ENCODE measurements at regions of chr16 and their contacts with region 1.

Region 1: DNA sequence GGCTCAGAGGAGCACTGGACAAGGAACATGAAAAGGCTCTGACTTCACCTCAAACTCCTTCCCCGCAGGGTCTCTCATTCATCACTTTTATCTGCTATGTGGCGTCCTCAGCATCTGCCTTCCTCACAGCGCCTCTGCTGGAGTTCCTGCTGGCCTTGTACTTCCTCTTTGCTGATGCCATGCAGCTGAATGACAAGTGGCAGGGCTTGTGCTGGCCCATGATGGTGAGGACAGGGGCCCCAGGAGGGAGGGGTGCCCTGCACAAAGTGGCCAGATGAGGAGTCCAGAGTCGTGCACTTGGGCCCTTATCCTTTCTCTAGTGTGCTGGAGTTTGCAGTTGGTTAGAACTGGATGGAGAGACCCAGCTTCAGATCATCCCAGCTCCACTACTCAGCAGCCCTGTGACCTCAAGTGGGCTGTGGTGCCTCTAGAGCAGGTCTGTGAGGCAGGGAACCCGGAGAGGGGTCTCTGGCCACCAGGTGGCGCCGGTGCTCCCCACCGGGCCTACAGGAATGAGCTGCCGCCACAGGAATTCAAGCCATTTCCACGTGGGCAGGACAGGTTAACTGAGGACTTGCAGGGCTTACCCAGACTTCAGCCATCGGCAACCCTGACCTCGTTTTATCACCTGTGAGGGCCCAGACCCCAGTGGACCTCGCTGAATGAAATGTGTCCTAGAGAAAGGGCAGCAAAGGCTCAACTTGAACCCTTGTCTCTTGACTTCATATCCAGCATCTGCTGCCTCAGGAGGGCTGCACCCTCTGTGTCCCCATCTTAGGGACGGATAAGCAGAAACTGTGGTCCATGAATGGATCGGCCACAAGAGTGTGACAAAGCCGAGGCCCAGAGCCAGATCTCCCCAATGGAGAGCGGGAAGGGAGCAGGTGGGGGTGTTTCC is 4.0 kb downstream of the CMTM3 start:
- DNase-seq: peak; percentile 94
- H3K4me3 Mint-ChIP-seq: peak overlapping the region; percentile 68
- H3K27ac Mint-ChIP-seq: peak overlapping the region; percentile 76
- H3K4me1 Mint-ChIP-seq: peaks cover 33% of the 10 kb centered on the region
- H3K27me3 Mint-ChIP-seq: no peaks in the 10 kb centered on the region

Region 2: GRCh38 chr16:66116163-66117002 is 492.1 kb before region 1 on chr16:
- intact Hi-C with region 1: no loop called
- DNase-seq: no peak
- H3K4me3 Mint-ChIP-seq: no peak overlapping the region
- H3K27ac Mint-ChIP-seq: no peak overlapping the region
- H3K4me1 Mint-ChIP-seq: no peaks in the 10 kb centered on the region
- H3K27me3 Mint-ChIP-seq: no peaks in the 10 kb centered on the region

Region 3: GRCh38 chr16:66406534-66407221 is 201.8 kb before region 1 on chr16:
- intact Hi-C with region 1: loop called (anchors 1 kb)
- DNase-seq: peak; percentile 96
- H3K4me3 Mint-ChIP-seq: peak overlapping the region; percentile 87
- H3K27ac Mint-ChIP-seq: peak overlapping the region; percentile 63
- H3K4me1 Mint-ChIP-seq: peaks cover 19% of the 10 kb centered on the region
- H3K27me3 Mint-ChIP-seq: peaks cover 19% of the 10 kb centered on the region

Region 4: GRCh38 chr16:66521951-66522771 is 86.3 kb before region 1 on chr16:
- intact Hi-C with region 1: loop called (anchors 1 kb)
- DNase-seq: peak; percentile 96
- H3K4me3 Mint-ChIP-seq: peak overlapping the region; percentile 83
- H3K27ac Mint-ChIP-seq: peak overlapping the region; percentile 97
- H3K4me1 Mint-ChIP-seq: peaks cover 80% of the 10 kb centered on the region
- H3K27me3 Mint-ChIP-seq: no peaks in the 10 kb centered on the region

Region 5: GRCh38 chr16:66588981-66589713 is 19.3 kb before region 1 on chr16:
- intact Hi-C with region 1: loop called (anchors 1 kb)
- DNase-seq: peak; percentile 89
- H3K4me3 Mint-ChIP-seq: peak overlapping the region; percentile 76
- H3K27ac Mint-ChIP-seq: peak overlapping the region; percentile 56
- H3K4me1 Mint-ChIP-seq: peaks cover 34% of the 10 kb centered on the region
- H3K27me3 Mint-ChIP-seq: no peaks in the 10 kb centered on the region

Region 6: DNA sequence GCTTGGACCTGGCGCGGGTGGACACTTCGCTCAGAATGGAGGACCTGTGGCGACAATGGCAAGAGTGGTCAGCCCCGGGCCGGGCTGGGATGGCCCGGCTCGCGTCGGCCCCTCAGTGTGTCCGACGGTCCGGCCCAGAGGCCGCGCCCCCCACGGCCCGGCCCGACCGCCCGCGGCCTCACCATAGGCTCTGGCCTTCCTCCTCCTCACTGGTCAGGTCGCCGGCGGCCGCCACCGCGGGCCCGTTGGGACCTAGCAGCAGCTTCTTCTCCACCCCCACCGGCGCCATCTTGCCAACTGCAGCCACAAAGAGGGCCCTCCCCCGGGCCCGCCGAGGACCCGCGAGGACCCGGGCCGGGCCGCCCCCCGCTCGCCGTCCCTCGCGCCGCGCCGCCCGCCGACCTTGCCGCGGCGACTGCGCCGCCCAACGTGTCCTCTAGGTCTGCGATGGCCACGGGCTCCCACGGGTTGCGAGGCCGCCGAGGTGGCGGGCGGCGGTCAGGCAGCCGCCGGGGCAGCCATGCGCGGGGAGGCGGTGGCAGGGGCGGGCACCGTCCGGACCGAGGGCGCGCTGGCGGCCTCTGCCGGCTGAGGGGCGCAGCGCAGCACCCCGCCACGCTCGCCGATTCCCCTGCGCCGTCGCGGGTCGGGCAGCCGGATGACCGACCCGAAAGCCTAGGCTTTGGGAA is 143.0 kb after region 1 on chr16 and contains the start of gene DYNC1LI2:
- intact Hi-C with region 1: loop called (anchors 5 kb)
- DNase-seq: peak; percentile 95
- H3K4me3 Mint-ChIP-seq: peak within 1 kb of the TSS; percentile 91
- H3K27ac Mint-ChIP-seq: peak within 1 kb of the TSS; percentile 90
- H3K4me1 Mint-ChIP-seq: peaks cover 47% of the 10 kb centered on the region
- H3K27me3 Mint-ChIP-seq: peaks cover 25% of the 10 kb centered on the region
- total RNA-seq, gene DYNC1LI2: 51.4 and 56.5 TPM in 2 replicates